ENCODE measurements at regions of chr2 and their contacts with region 1.

Region 1: GRCh38 chr2:46163610-46164554 is 133.3 kb upstream of the EPAS1 start:
- DNase-seq: no peak
- ATAC-seq: no peak
- H3K4me3 Mint-ChIP-seq: no peak overlapping the region
- H3K27ac Mint-ChIP-seq: no peak overlapping the region
- H3K4me1 Mint-ChIP-seq: no peaks in the 10 kb centered on the region
- H3K27me3 Mint-ChIP-seq: no peaks in the 10 kb centered on the region

Region 2: DNA sequence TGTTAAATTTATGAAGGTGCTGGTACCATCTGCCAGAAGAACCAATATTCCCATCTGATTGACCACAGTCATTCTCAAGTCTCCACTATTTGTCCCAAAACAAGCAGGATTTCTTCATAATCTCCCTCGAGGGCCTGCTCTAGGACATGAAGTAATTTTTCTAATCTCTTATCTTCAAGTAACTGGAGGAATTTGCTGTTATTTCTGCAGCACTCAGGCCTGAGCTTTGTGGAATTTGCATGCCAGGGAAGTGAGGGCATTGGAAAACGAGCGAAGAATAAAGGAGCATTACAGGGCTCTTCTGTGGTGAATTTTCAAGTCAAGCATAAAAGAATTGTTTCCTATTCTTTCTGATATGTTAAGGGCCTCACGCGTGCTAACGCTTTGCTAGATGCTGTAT is 27.9 kb before region 1 on chr2:
- CTCF ChIA-PET with region 1: interaction called, 4 read pairs
- POLR2A ChIA-PET with region 1: interaction called, 10 read pairs
- intact Hi-C with region 1: no loop called
- DNase-seq: no peak
- ATAC-seq: no peak
- H3K4me3 Mint-ChIP-seq: no peak overlapping the region
- H3K27ac Mint-ChIP-seq: no peak overlapping the region
- H3K4me1 Mint-ChIP-seq: no peaks in the 10 kb centered on the region
- H3K27me3 Mint-ChIP-seq: no peaks in the 10 kb centered on the region

Region 3: GRCh38 chr2:46230115-46230571 is 66.3 kb after region 1 on chr2:
- CTCF ChIA-PET with region 1: no interaction called
- POLR2A ChIA-PET with region 1: no interaction called
- intact Hi-C with region 1: no loop called
- DNase-seq: peak; percentile 39
- ATAC-seq: peak; percentile 43
- H3K4me3 Mint-ChIP-seq: no peak overlapping the region
- H3K27ac Mint-ChIP-seq: peak overlapping the region; percentile 68
- H3K4me1 Mint-ChIP-seq: peaks cover 35% of the 10 kb centered on the region
- H3K27me3 Mint-ChIP-seq: no peaks in the 10 kb centered on the region

Measured in activated CD4-positive, alpha-beta T cell treated with anti-CD3 and anti-CD28 coated beads for 36 hours (primary cell).